Activated T-helper 1 cell treated with anti-CD3 and anti-CD28 coated beads, Interleukin-12 subunit alpha, Interleukin-12 subunit beta, Interleukin-2, Interleukin-4 antibody, amounts not matched to agents 30 ng/mL and 10 ng/mL and 1 ng/mL, durations not matched to agents 14 hours and 24 hours and 36 hours (primary cell): ENCODE measurements at regions of chr17 and their contacts with region 1.

Region 1: DNA sequence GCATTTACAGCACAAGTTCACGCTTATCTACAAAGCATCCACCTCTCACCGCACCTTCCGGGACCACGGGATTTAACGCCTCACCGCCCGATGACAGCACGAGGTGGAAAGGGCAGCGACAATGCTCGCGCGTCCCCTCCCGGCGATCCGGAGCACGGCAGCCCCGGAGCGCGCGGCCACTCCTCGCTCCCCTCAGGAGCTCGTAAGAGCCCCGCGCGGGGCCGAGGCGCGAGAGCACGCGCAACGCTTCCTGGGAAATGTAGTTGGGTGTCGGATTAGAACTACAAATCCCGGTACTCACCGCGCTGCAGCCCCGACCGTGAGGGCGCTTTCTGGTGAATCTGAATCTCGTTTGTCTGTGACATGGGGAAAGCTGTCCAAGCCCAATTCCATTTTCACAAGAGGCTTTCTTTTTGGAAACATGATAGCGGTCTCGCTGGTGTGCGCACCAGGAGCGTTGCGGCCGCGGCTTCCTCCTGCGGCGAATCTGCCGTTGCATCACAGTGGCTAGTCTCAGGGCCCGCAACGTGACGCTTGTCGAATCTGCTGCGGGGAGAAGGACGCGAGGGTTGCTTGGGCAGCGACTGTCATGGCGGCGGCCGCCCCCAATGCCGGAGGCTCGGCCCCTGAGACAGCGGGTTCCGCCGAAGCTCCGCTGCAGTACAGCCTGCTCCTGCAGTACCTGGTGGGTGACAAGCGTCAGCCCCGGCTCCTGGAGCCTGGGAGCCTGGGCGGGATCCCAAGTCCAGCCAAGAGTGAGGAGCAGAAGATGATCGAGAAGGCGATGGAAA is at the start of gene TIMM22:
- DNase-seq: peak; percentile 89
- H3K4me3 Mint-ChIP-seq: peak within 1 kb of the TSS; percentile 91
- H3K27ac Mint-ChIP-seq: peak within 1 kb of the TSS; percentile 96
- H3K4me1 Mint-ChIP-seq: peaks cover 25% of the 10 kb centered on the region
- H3K27me3 Mint-ChIP-seq: no peaks in the 10 kb centered on the region
- total RNA-seq, gene TIMM22: 14.6 and 17.3 TPM in 2 replicates

Region 2: GRCh38 chr17:143782-144281 is 852.9 kb before region 1 on chr17:
- intact Hi-C with region 1: loop called (anchors 2 kb)
- DNase-seq: peak; percentile 83
- H3K4me3 Mint-ChIP-seq: no peak overlapping the region
- H3K27ac Mint-ChIP-seq: no peak overlapping the region
- H3K4me1 Mint-ChIP-seq: no peaks in the 10 kb centered on the region
- H3K27me3 Mint-ChIP-seq: peaks cover 9% of the 10 kb centered on the region

Region 3: GRCh38 chr17:409848-410545 is 586.8 kb before region 1 on chr17:
- intact Hi-C with region 1: loop called (anchors 1 kb)
- DNase-seq: peak; percentile 99
- H3K4me3 Mint-ChIP-seq: peak overlapping the region; percentile 95
- H3K27ac Mint-ChIP-seq: peak overlapping the region; percentile 89
- H3K4me1 Mint-ChIP-seq: peaks cover 57% of the 10 kb centered on the region
- H3K27me3 Mint-ChIP-seq: peaks cover 7% of the 10 kb centered on the region

Region 4: DNA sequence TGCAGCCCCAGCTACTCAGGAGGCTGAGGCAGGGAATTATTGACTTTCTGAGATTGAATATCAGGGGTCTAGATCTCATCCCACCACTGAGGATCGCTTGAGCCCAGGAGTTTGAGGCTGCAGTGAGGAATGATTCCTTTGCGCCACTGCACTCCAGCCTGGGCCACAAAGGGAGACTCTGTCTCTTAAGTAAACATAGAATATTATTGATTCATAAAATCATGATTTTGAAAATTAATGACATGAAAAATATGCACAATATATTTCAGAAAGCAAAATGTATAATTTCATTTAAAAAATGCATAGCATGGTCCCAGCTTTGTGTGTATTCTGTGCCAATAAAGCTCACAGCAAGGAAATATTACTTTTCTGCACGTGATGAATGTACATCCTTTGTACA is 280.5 kb before region 1 on chr17:
- intact Hi-C with region 1: loop called (anchors 1 kb)
- DNase-seq: no peak
- H3K4me3 Mint-ChIP-seq: peak overlapping the region; percentile 26
- H3K27ac Mint-ChIP-seq: no peak overlapping the region
- H3K4me1 Mint-ChIP-seq: peaks cover 13% of the 10 kb centered on the region
- H3K27me3 Mint-ChIP-seq: peaks cover 8% of the 10 kb centered on the region

Region 5: DNA sequence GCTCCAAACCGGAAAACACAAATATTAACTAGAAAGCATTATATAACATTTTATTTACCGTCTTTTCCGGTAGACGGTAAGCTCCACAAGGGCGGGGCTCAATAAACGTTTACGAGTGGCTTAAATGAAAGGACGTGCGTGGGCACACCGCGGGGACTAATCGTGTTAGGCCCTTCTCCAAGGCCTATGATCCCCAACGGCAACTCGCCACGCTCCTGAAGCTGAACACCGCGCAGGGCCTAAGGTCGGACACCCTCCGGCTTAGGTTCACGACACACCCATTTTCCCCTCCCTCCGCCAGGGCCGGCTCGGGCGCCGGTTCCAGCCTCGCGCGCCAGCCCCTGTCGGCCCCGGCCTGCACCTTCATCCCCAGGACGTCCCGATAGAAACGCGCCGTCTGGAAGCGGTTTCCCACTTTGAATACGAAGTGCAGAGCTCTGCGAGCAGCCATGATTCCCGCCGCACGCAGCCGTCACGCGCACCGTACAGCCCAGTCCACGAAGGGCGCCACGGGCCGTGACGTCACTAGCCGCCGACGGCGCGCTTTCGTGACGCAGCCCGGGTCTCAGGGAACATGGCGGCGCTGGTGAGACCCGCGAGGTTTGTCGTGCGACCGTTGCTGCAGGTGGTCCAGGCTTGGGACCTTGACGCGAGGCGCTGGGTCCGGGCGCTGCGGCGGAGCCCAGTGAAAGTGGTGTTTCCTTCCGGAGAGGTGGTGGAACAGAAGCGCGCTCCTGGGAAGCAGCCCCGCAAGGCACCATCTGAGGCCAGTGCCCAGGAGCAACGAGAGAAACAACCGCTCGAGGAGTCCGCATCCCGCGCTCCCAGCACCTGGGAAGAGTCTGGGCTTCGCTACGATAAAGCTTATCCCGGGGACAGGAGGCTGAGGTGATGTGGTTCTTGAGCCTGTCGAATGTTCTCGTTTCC is 214.7 kb before region 1 on chr17 and contains the starts of genes GLOD4 and MRM3:
- intact Hi-C with region 1: loop called (anchors 1 kb)
- DNase-seq: peak; percentile 94
- H3K4me3 Mint-ChIP-seq: peak within 1 kb of the TSS; percentile 97
- H3K27ac Mint-ChIP-seq: peak within 1 kb of the TSS; percentile 97
- H3K4me1 Mint-ChIP-seq: peaks cover 37% of the 10 kb centered on the region
- H3K27me3 Mint-ChIP-seq: no peaks in the 10 kb centered on the region
- total RNA-seq, gene GLOD4: 97.0 and 97.6 TPM in 2 replicates
- total RNA-seq, gene MRM3: 31.7 and 32.0 TPM in 2 replicates

Region 6: GRCh38 chr17:794876-795275 is 201.9 kb before region 1 on chr17:
- intact Hi-C with region 1: loop called (anchors 1 kb)
- DNase-seq: peak; percentile 5
- H3K4me3 Mint-ChIP-seq: no peak overlapping the region
- H3K27ac Mint-ChIP-seq: no peak overlapping the region
- H3K4me1 Mint-ChIP-seq: peaks cover 6% of the 10 kb centered on the region
- H3K27me3 Mint-ChIP-seq: no peaks in the 10 kb centered on the region

Region 7: GRCh38 chr17:879549-880442 is 117.0 kb before region 1 on chr17:
- intact Hi-C with region 1: loop called (anchors 1 kb)
- DNase-seq: peak; percentile 34
- H3K4me3 Mint-ChIP-seq: no peak overlapping the region
- H3K27ac Mint-ChIP-seq: no peak overlapping the region
- H3K4me1 Mint-ChIP-seq: peaks cover 13% of the 10 kb centered on the region
- H3K27me3 Mint-ChIP-seq: peaks cover 2% of the 10 kb centered on the region

Region 8: DNA sequence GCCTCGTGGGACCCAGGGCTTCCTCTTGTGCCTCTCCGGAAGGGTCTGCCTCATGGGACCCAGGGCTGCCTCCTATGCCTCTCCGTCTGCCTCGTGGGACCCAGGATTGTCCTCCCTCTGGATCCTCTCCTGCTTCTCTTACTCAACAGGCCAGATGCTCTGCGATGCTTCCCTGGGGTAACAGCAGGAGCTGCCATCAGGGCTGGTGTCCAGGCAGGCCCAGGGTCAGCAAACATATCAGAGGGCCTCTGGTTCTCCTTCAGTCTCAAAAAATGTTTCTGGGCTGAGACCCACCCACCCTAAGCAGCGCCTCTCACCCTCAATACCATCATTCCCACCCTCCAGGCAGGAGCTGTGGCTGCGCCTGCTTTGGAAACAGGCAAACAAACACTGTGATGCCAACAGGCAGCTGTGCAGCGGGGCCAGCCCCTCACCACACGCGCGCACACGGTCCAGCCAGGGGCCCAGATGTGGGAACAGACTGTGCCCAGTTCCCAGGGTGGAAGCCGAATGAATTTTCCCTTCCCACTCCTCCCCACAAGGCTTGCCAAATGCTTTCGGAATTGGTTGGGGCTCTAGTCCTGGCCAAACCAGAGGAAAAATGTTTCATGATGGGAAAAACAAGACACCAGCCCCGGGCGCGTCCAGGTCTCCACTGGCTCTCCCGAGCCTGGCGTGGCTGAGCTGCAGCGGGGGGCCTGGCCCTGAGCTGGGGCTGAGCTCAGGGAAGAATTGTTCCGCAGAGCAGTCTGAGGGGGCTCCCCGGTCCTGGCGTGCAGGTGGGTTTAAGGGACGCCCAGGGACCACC is 11.5 kb after region 1 on chr17:
- intact Hi-C with region 1: no loop called
- DNase-seq: no peak
- H3K4me3 Mint-ChIP-seq: no peak overlapping the region
- H3K27ac Mint-ChIP-seq: no peak overlapping the region
- H3K4me1 Mint-ChIP-seq: no peaks in the 10 kb centered on the region
- H3K27me3 Mint-ChIP-seq: no peaks in the 10 kb centered on the region

Region 9: GRCh38 chr17:1047177-1047878 is 50.6 kb after region 1 on chr17:
- intact Hi-C with region 1: no loop called
- DNase-seq: no peak
- H3K4me3 Mint-ChIP-seq: no peak overlapping the region
- H3K27ac Mint-ChIP-seq: no peak overlapping the region
- H3K4me1 Mint-ChIP-seq: no peaks in the 10 kb centered on the region
- H3K27me3 Mint-ChIP-seq: no peaks in the 10 kb centered on the region